Panc1 (cell line): ENCODE measurements at regions of chr19 and their contacts with region 1.

Region 1: GRCh38 chr19:48518207-48518606 is 6.6 kb upstream of the LMTK3 start:
- DNase-seq: no peak
- ATAC-seq: no peak
- H3K4me3 ChIP-seq: no peak overlapping the region
- H3K27ac ChIP-seq: no peak overlapping the region
- H3K4me1 ChIP-seq: peaks cover 4% of the 10 kb centered on the region; the same call in 1 of the 2 replicates
- H3K27me3 ChIP-seq: no peaks in the 10 kb centered on the region
- CTCF ChIP-seq: no peak

Region 2: DNA sequence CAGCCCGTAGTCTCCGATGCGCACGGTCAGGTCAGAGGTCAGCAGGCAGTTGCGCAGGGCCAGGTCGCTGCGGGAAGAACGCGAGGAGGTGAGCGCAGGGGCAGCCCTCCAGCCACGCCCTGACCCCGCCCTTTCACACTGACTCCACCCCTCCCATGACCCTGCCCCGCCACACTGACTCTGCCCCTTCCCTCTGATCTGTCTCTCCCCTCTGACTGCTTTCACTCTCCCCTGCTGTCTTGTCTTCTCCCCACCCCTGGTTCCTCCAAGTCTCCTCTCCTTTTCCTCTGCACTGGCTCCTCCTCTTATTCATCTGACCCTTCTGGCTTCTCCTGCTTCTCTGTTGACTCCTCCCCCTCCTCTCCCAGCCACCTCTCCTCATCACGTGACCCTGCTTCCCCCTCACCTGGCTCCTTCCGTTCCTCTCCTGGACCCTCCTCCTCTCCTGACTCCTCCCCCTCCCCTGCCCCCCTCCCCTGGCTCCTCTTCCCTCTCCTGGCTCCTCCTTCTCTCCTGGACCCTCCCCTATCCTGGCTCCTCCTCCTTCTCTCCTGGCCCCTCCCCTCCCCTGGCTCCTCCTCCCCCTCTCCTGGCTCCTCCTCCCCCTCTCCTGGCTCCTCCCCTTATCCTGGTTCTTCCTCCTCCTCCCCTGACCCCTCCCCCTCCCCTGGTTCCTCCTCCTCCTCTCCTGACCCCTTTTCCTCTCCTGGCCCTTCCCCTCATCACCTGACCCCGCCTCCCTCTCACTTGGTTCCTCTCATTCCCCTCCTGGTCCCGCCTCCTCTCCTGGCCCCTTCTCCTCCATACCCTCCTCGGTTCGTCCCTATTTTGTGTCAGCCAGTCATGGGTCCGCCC is 16.5 kb before region 1 on chr19:
- CTCF ChIA-PET with region 1: no interaction called
- POLR2A ChIA-PET with region 1: no interaction called
- in situ Hi-C with region 1: no loop called
- intact Hi-C with region 1: no loop called
- DNase-seq: no peak
- ATAC-seq: peak; percentile 79
- H3K4me3 ChIP-seq: peak overlapping the region; percentile 41 to 64
- H3K27ac ChIP-seq: peak overlapping the region; percentile 65
- H3K4me1 ChIP-seq: no peaks in the 10 kb centered on the region; the same call in 1 of the 2 replicates
- H3K27me3 ChIP-seq: no peaks in the 10 kb centered on the region
- CTCF ChIP-seq: no peak

Region 3: GRCh38 chr19:48530066-48530720 is 12.0 kb after region 1 on chr19:
- CTCF ChIA-PET with region 1: no interaction called
- POLR2A ChIA-PET with region 1: interaction called, 12 read pairs
- in situ Hi-C with region 1: no loop called
- intact Hi-C with region 1: no loop called
- DNase-seq: no peak
- ATAC-seq: no peak
- H3K4me3 ChIP-seq: no peak overlapping the region
- H3K27ac ChIP-seq: peak overlapping the region; percentile 17; the same call in 1 of the 2 replicates
- H3K4me1 ChIP-seq: peaks cover 4% of the 10 kb centered on the region
- H3K27me3 ChIP-seq: no peaks in the 10 kb centered on the region
- CTCF ChIP-seq: no peak